Ascending aorta (tissue), 2 donors: ENCODE measurements at regions of chr2 and their contacts with region 1.

Region 1: DNA sequence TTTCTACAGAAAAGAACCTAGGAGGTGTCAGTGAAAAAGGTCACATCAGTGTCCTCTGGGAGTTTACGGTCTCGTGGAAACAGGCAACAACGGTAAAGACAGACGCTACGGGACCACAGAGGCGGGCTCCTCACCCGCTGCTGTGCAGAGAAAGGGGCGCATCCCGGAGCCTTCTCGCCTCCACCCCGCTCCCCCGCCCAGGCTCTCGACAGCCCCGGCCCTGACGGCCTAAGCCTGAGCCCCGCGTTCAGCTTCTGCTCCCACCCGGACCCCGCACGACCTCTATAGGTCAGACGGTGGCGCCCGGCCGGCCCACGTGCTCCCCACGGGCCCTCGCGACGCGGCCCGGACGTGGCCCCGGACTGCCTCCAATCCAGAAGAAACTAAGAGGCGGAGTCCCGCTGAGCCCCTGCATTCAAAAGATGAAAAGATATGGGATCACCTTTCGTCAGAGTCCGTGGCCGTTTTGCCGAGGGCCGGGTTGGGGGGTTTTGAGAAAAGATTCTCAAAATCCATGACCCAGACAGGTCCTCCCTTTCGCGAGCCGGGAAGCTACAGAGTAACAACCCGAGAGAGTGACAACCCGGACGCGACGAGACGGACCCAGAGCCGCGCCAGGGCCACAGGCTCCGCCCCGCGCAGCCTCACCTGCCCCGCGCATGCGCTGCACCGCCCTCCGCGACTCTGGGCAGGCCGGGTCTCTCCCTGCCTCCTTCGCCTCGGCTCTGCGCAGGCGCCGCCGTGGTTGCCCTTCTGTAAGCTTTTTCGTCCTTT is at the start of gene ZC3H8:
- DNase-seq: peak; percentile 59 to 96
- H3K4me3 ChIP-seq: peak within 1 kb of the TSS; percentile 65 to 76
- H3K27ac ChIP-seq: peak within 1 kb of the TSS; percentile 61 to 69
- H3K4me1 ChIP-seq: peaks cover 0 to 7% of the 10 kb centered on the region in 2 donors
- H3K27me3 ChIP-seq: no peaks in the 10 kb centered on the region
- CTCF ChIP-seq: peak in 1 of 3 experiments; percentile 9
- total RNA-seq, gene ZC3H8: 0.11 TPM

Region 2: GRCh38 chr2:111958901-111959300 is 295.8 kb before region 1 on chr2:
- intact Hi-C with region 1: no loop called
- DNase-seq: no peak
- H3K4me3 ChIP-seq: no peak overlapping the region
- H3K27ac ChIP-seq: peak overlapping the region; percentile 14 to 39
- H3K4me1 ChIP-seq: peaks cover 3 to 11% of the 10 kb centered on the region in 2 donors
- H3K27me3 ChIP-seq: no peaks in the 10 kb centered on the region
- CTCF ChIP-seq: peak in 1 of 3 experiments; percentile 10

Region 3: GRCh38 chr2:112121682-112122254 is 132.9 kb before region 1 on chr2:
- intact Hi-C with region 1: loop called (anchors 5 kb)
- DNase-seq: no peak
- H3K4me3 ChIP-seq: no peak overlapping the region
- H3K27ac ChIP-seq: no peak overlapping the region
- H3K4me1 ChIP-seq: no peaks in the 10 kb centered on the region
- H3K27me3 ChIP-seq: no peaks in the 10 kb centered on the region
- CTCF ChIP-seq: peak; percentile 34 to 59 (median 47)

Region 4: GRCh38 chr2:112275306-112275886 is 20.7 kb after region 1 on chr2 and contains the start of gene ZC3H6:
- intact Hi-C with region 1: loop called (anchors 2 kb)
- DNase-seq: peak; percentile 94 to 99
- H3K4me3 ChIP-seq: peak within 1 kb of the TSS; percentile 96 to 99
- H3K27ac ChIP-seq: peak within 1 kb of the TSS; percentile 100
- H3K4me1 ChIP-seq: peaks cover 0 to 8% of the 10 kb centered on the region in 2 donors
- H3K27me3 ChIP-seq: no peaks in the 10 kb centered on the region
- CTCF ChIP-seq: peak in 1 of 3 experiments; percentile 28
- total RNA-seq, gene ZC3H6: 1.5 TPM

Region 5: DNA sequence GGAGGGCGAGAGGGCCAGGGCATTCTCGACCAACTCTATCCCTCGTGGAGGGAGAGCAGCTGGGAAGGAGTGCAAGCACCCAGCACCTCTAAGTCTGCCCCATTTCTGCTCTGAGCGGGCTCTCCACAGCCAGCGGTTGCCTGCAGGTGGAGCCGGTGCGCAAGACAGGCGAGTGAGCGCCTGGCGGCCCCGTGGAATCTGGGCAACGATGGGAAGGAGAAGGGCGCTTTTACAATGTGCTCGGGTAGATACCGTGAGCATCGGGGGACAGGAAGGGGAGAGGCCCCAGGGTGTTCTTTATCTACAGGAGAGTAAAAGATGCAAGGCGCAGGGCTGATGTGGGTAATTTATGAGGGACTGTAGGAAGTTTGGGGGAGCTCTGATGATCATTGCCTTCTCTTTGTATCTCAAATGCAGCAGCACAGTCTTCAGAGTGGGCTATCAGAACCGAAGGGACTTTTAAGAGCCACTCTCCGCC is 226.4 kb after region 1 on chr2:
- intact Hi-C with region 1: loop called (anchors 5 kb)
- DNase-seq: peak; percentile 22 to 88
- H3K4me3 ChIP-seq: peak overlapping the region; percentile 81 to 84
- H3K27ac ChIP-seq: peak overlapping the region; percentile 74 to 83
- H3K4me1 ChIP-seq: peaks cover 0 to 19% of the 10 kb centered on the region in 2 donors
- H3K27me3 ChIP-seq: no peaks in the 10 kb centered on the region
- CTCF ChIP-seq: peak; percentile 57 to 91 (median 80)